Dendritic cell treated with granulocyte-macrophage colony-stimulating factor and Interleukin-4, amounts not matched to agents 40 ng/mL and 50 ng/mL, for 4 days (primary cell): ENCODE measurements at regions of chr21 and their contacts with region 1.

Region 1: GRCh38 chr21:33403779-33404585 is 769 bp downstream of the IFNGR2 start:
- H3K4me3 Mint-ChIP-seq: peak overlapping the region; percentile 98
- H3K27ac Mint-ChIP-seq: peak overlapping the region; percentile 99
- H3K4me1 Mint-ChIP-seq: peaks cover 74% of the 10 kb centered on the region
- H3K27me3 Mint-ChIP-seq: no peaks in the 10 kb centered on the region

Region 2: DNA sequence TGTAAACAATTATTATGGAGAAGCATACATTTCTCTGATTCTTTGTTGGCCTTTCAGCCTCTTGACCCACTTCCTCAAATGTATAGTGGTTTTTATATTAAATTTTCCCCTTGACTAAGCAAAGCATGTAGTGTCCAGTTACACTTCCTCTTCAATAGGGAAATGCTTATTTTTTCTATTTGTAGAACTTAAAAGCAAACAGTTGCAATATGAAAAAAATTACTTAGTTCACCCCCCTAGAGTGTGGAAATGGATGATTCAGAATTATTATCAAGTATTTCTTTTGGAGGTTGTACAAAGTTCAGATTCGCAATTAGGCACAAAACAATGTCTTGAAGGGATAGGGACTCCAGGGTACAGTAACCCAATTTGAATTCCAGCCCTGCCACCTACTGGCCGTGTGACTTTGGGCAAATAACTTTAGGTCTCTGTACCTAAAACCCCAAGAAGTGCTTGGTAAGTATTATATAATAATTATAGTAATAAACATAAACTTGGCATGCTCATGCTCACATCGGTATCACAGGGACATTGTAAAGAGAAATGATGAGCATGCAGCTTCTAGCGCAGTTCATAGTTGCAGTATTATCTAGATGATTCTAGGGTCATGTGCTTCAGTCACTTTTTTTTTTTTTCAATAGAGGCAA is 29.4 kb before region 1 on chr21:
- intact Hi-C with region 1: loop called (anchors 2 kb)
- H3K4me3 Mint-ChIP-seq: no peak overlapping the region
- H3K27ac Mint-ChIP-seq: peak overlapping the region; percentile 87
- H3K4me1 Mint-ChIP-seq: peaks cover 60% of the 10 kb centered on the region
- H3K27me3 Mint-ChIP-seq: no peaks in the 10 kb centered on the region

Region 3: GRCh38 chr21:33433425-33434114 is 29.6 kb after region 1 on chr21:
- intact Hi-C with region 1: loop called (anchors 1 kb)
- H3K4me3 Mint-ChIP-seq: peak overlapping the region; percentile 64
- H3K27ac Mint-ChIP-seq: peak overlapping the region; percentile 98
- H3K4me1 Mint-ChIP-seq: peaks cover 62% of the 10 kb centered on the region
- H3K27me3 Mint-ChIP-seq: no peaks in the 10 kb centered on the region

Region 4: DNA sequence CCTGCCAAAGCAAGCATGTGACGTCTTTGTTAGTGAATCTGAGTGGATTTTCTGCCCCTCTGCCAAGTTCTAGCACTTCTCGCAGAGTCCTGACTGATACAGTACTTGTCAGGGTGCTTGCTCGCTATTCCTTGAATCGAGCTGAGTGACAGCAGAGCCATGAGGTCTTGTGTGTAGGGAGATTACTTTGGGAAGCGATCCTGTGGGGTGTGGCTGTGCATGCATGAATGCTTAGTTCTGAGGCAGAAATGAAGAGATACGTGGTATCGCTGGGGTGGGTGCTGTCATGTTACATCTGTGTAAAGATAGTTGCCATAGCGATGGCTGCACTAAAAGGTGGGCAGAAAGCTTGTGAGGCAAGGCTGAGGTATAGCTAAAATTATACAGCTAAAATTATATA is 106.8 kb after region 1 on chr21:
- intact Hi-C with region 1: no loop called
- H3K4me3 Mint-ChIP-seq: no peak overlapping the region
- H3K27ac Mint-ChIP-seq: no peak overlapping the region
- H3K4me1 Mint-ChIP-seq: no peaks in the 10 kb centered on the region
- H3K27me3 Mint-ChIP-seq: no peaks in the 10 kb centered on the region